Right ventricle myocardium inferior (tissue), 1 donor: ENCODE measurements at regions of chr1 and their contacts with region 1.

Region 1: DNA sequence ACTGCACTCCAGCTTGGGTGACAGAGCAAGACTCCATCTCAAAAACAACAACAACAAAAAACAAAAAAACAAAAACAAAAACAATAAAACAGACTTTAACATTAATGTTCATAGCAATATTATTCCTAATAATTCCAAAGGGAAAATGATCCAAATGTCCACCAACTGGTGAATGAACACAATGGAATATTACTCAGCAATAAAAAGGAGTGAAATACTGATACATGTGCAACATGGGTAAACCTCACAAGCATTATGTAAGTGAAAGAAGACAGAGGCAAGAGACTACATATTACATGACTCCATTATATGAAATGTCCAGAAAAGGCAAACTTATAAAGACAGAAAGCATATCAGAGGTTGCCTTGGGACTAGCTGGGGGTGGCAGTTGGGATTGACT is 6.1 kb upstream of the TTF2 start:
- DNase-seq: no peak
- ATAC-seq: no peak

Region 2: DNA sequence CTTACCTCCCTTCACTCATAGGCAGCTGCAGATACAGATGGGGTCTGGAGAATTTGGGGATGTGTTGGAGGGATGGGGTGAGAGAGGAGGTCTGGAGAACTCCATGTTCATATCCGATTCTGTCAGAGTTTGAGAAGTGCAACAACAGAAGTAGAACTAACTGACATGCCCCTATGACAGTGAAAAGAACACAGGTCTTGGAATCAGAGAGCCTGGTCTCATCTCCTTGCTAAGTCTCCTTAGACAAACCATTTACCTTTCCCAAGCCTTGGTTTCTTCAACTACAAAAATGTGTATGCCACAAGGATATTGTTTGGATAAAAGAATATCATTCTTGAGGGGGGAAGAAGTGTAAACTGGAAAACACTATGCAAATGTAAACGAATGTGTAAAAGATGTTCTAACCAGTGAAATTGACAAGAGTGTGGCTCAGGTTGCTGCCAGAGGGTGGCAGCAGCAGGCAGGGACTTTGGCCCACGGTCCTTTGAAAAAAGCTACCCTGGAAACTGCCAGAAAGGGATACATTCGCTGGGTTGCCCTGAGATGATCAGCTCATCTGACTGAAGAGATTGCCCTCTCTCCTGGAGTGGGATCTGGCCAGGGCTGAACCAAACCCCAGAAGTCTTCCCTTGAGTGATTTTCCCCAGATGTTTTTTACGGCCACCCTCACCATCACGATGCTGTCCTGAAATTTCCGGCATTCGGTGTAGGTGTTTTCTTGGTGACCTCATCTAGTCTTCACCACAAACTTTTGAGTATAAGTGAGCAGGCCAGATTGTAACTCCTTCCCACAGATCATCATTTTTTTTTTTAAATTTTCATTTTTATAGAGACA is 316.8 kb before region 1 on chr1:
- intact Hi-C with region 1: loop called (anchors 2 kb)
- DNase-seq: no peak
- ATAC-seq: peak; percentile 30

Region 3: GRCh38 chr1:116808200-116808847 is 245.7 kb before region 1 on chr1:
- intact Hi-C with region 1: no loop called
- DNase-seq: no peak
- ATAC-seq: no peak

Region 4: GRCh38 chr1:117017648-117018047 is 36.4 kb before region 1 on chr1:
- intact Hi-C with region 1: no loop called
- DNase-seq: peak; percentile 65
- ATAC-seq: peak; percentile 87